IMR-90 (cell line): ENCODE measurements at regions of chrX and their contacts with region 1.

Region 1: DNA sequence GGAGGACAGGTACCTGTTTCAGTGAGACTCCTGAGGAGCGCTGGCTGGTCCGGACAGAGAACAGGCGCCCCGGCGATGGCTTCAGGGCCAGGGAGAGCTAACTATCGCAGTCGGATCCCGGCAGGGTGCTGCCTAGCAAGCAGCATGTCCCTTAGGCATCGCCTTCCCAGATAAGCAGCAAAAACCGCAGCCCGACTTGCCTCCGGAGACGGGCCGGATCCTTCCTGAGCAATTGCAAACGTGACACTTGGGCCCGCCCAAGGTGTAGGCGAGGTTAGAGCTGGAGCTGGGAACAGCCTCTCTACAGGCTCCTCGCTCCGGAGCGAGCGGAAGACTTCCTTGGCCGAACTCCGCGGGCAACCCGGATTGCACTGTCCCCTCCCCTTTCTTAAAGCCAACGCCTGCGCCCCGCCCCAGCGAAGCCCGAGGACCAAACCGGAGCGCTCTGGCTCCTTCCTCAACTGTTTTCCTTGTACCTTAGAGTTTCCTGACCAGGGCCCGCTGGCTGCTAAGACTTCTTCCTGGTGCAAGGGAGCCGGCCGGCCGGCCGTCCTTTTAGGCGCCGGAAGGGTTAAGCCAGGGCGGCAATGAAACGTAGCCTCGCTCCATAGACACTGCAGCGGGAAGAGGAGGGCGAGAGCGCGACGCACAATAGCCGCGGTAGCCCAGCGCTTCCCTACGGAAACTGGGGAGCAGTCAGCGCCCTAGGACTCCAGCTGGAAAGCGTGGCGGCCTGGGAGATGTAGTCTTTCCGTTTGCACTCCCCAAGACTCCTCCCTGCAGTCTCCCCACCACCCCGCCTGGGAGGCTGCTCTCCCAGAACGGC is at the start of gene OPHN1:
- DNase-seq: peak; percentile 74
- ATAC-seq: peak; percentile 88
- H3K4me3 ChIP-seq: peak within 1 kb of the TSS; percentile 90
- H3K27ac ChIP-seq: peak within 1 kb of the TSS; percentile 82
- H3K4me1 ChIP-seq: 0 out of 2 replicates have a peak, but pooled peaks cover 5% of the 10 kb centered on the region
- H3K27me3 ChIP-seq: no peaks in the 10 kb centered on the region
- CTCF ChIP-seq: no peak
- POLR2A ChIP-seq: no peak; the same call in 1 of the 2 replicates
- RAD21 ChIP-seq: no peak
- total RNA-seq, gene OPHN1: 12.5 and 13.1 TPM in 2 replicates

Region 2: GRCh38 chrX:68354869-68355852 is 78.2 kb before region 1 on chrX:
- CTCF ChIA-PET with region 1: no interaction called
- POLR2A ChIA-PET with region 1: no interaction called
- dilution Hi-C with region 1: no loop called
- in situ Hi-C with region 1: no loop called
- intact Hi-C with region 1: no loop called
- DNase-seq: peak; percentile 38
- ATAC-seq: peak; percentile 79
- H3K4me3 ChIP-seq: no peak overlapping the region
- H3K27ac ChIP-seq: no peak overlapping the region
- H3K4me1 ChIP-seq: peaks cover 6% of the 10 kb centered on the region
- H3K27me3 ChIP-seq: no peaks in the 10 kb centered on the region
- CTCF ChIP-seq: no peak
- POLR2A ChIP-seq: no peak
- RAD21 ChIP-seq: no peak

Region 3: GRCh38 chrX:68556029-68556428 is 122.7 kb after region 1 on chrX:
- CTCF ChIA-PET with region 1: no interaction called
- POLR2A ChIA-PET with region 1: no interaction called
- dilution Hi-C with region 1: no loop called
- in situ Hi-C with region 1: no loop called
- intact Hi-C with region 1: no loop called
- DNase-seq: no peak
- ATAC-seq: no peak
- H3K4me3 ChIP-seq: no peak overlapping the region
- H3K27ac ChIP-seq: no peak overlapping the region
- H3K4me1 ChIP-seq: no peaks in the 10 kb centered on the region
- H3K27me3 ChIP-seq: peaks cover 2% of the 10 kb centered on the region; the same call in 1 of the 2 replicates
- CTCF ChIP-seq: no peak
- POLR2A ChIP-seq: no peak
- RAD21 ChIP-seq: no peak

Region 4: GRCh38 chrX:68686097-68686977 is 253.0 kb after region 1 on chrX:
- CTCF ChIA-PET with region 1: no interaction called
- POLR2A ChIA-PET with region 1: no interaction called
- dilution Hi-C with region 1: no loop called
- in situ Hi-C with region 1: no loop called
- intact Hi-C with region 1: loop called (anchors 5 kb)
- DNase-seq: peak; percentile 22
- ATAC-seq: peak; percentile 82
- H3K4me3 ChIP-seq: peak overlapping the region; percentile 29
- H3K27ac ChIP-seq: peak overlapping the region; percentile 32; the same call in 1 of the 2 replicates
- H3K4me1 ChIP-seq: peaks cover 7% of the 10 kb centered on the region
- H3K27me3 ChIP-seq: peaks cover 2% of the 10 kb centered on the region; the same call in 1 of the 2 replicates
- CTCF ChIP-seq: no peak
- POLR2A ChIP-seq: no peak
- RAD21 ChIP-seq: no peak